PC-9 (cell line): ENCODE measurements at regions of chr3 and their contacts with region 1.

Region 1: GRCh38 chr3:83523470-83524073 is 1435.2 kb upstream of the CADM2 start:
- DNase-seq: peak; percentile 33 to 52
- H3K4me3 ChIP-seq: no peak overlapping the region
- H3K27ac ChIP-seq: no peak overlapping the region
- H3K4me1 ChIP-seq: no peaks in the 10 kb centered on the region
- H3K27me3 ChIP-seq: no peaks in the 10 kb centered on the region
- CTCF ChIP-seq: peak; percentile 75

Region 2: DNA sequence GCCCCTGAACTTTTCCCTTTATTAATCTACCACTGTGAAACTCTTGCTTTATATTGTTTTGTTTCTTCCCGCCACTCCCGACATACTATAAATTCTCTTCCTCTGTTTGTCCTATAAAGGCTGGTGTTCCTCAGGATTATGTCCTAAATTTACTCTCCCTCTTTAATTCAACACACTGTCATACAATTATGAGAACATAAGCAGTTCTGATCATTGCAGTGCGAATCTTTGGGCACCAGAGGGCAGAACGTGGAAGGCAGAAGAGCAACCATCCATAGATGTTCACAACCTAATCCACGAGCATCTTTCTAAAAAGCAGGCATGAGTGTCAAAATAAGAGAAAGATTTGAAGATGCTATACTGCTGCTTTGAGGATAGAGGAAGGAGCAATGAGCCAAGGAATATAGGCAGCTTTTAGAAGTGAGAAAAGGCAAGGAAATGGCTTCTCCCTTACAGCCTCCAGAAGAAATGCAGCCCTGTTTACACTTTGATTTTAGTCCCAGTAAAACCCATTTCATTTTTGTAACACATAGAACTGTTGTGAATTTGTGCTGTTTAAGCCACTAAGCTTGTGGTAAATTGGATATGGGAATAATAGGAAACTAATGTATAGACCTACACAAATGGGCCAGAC is 1941.5 kb before region 1 on chr3:
- CTCF ChIA-PET with region 1: no interaction called
- POLR2A ChIA-PET with region 1: no interaction called
- intact Hi-C with region 1: loop called (anchors 5 kb)
- DNase-seq: peak in 1 of 2 experiments; percentile 24
- H3K4me3 ChIP-seq: no peak overlapping the region
- H3K27ac ChIP-seq: no peak overlapping the region
- H3K4me1 ChIP-seq: no peaks in the 10 kb centered on the region
- H3K27me3 ChIP-seq: no peaks in the 10 kb centered on the region
- CTCF ChIP-seq: peak; percentile 68

Region 3: DNA sequence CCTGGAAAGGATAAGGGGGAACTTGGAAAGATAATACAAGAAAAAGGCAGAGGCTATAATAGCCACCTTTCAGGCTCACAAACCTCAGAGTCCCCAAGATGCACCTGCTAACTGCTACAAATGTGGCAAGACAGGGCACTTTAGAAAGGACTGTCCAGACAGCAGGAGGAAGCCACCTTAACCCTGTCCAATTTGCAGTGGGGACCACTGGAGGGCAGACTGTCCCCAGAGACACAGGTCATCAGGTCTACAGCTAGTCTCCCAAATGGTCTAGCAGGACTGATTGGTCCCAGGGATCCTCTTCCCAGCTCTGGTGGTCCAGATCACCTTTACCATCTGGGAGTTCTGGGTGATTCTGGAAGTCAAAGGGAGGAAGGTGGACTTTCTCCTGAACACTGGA is 879.6 kb before region 1 on chr3:
- CTCF ChIA-PET with region 1: no interaction called
- POLR2A ChIA-PET with region 1: no interaction called
- intact Hi-C with region 1: loop called (anchors 5 kb)
- DNase-seq: peak in 1 of 2 experiments; percentile 11
- H3K4me3 ChIP-seq: no peak overlapping the region
- H3K27ac ChIP-seq: no peak overlapping the region
- H3K4me1 ChIP-seq: no peaks in the 10 kb centered on the region
- H3K27me3 ChIP-seq: no peaks in the 10 kb centered on the region
- CTCF ChIP-seq: 0 out of 2 replicates have a peak, but pooled peaks have one; percentile 28

Region 4: DNA sequence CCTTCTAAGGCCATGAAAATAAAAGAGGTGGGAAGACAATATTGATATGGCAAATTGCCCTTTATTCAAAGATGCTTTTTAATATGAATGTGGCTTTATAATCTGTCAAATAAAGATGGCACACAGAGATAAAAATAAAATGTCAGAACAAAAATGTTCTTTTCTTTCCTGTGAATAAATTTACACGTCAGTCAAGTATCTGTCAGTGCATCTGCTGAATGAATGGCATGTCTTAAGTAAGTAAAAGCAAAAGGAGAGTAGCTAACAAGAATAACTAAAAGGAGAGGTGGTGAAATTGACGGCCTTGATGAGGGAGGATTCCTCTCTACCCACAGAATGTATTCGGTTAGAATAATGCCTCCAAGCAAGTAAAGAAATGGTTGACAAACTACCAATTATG is 740.4 kb before region 1 on chr3:
- CTCF ChIA-PET with region 1: no interaction called
- POLR2A ChIA-PET with region 1: no interaction called
- intact Hi-C with region 1: no loop called
- DNase-seq: no peak
- H3K4me3 ChIP-seq: no peak overlapping the region
- H3K27ac ChIP-seq: no peak overlapping the region
- H3K4me1 ChIP-seq: no peaks in the 10 kb centered on the region
- H3K27me3 ChIP-seq: no peaks in the 10 kb centered on the region
- CTCF ChIP-seq: no peak